Calu3 (cell line): ENCODE measurements at regions of chr12 and their contacts with region 1.

Region 1: GRCh38 chr12:12975322-12976077 is 23.5 kb upstream of the GPRC5D start:
- DNase-seq: peak; percentile 78
- H3K4me3 Mint-ChIP-seq: no peak overlapping the region
- H3K27ac Mint-ChIP-seq: no peak overlapping the region
- H3K4me1 Mint-ChIP-seq: peaks cover 8% of the 10 kb centered on the region
- H3K27me3 Mint-ChIP-seq: no peaks in the 10 kb centered on the region
- CTCF ChIP-seq: peak; percentile 59

Region 2: DNA sequence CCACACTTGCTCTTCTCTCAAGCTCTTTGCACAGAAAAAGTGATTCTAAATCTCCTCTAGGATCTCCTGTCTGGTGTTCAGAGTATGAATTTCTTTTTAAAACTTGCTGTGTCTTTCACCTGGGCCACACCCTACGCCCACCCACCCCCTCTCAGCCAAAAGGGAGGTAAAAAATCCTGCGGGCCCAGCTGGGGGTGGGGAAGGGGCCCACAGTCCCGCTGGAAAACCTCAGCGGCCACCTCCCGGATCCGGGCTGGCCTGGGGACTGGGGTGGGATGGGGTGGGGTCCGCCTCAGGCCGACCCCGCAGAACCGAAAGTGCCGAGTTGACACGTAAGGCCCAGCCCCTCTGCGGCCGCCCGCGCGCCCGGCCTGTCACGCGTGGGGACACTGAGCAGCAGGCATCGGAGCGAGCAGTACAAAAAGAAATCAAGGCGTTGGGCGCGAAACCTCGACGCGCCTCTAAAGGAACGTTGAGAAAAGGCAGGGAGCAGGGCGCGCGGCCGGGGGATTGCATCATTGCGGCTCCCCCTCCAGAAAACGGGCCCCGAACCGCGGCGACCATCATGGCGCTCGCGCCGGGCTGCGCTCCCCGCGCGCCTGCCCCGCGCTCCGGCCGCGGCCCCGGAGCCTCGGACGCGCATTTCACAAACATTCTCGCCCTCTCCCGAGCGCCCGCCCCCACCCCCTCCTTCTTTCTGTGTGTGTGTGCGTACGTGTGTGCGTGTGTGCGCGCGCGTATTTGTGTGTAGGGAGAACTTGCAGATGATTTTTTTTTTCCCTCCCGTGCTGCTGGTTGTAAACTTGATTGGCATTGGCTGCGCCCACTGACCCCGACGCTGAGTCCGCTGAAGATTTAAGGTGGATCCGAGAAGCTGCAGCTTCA is 250.6 kb before region 1 on chr12:
- CTCF ChIA-PET with region 1: no interaction called
- intact Hi-C with region 1: loop called (anchors 10 kb)
- DNase-seq: no peak
- H3K4me3 Mint-ChIP-seq: peak overlapping the region; percentile 99
- H3K27ac Mint-ChIP-seq: peak overlapping the region; percentile 98
- H3K4me1 Mint-ChIP-seq: peaks cover 26% of the 10 kb centered on the region
- H3K27me3 Mint-ChIP-seq: no peaks in the 10 kb centered on the region
- CTCF ChIP-seq: no peak

Region 3: GRCh38 chr12:12813120-12814101 is 162.1 kb before region 1 on chr12 and contains the start of gene DDX47:
- CTCF ChIA-PET with region 1: interaction called, 12 read pairs
- intact Hi-C with region 1: loop called (anchors 5 kb)
- DNase-seq: peak; percentile 98
- H3K4me3 Mint-ChIP-seq: peak within 1 kb of the TSS; percentile 88
- H3K27ac Mint-ChIP-seq: peak within 1 kb of the TSS; percentile 95
- H3K4me1 Mint-ChIP-seq: peaks cover 56% of the 10 kb centered on the region
- H3K27me3 Mint-ChIP-seq: no peaks in the 10 kb centered on the region
- CTCF ChIP-seq: peak; percentile 92
- total RNA-seq, gene DDX47: 60.2 and 60.5 TPM in 2 replicates

Region 4: DNA sequence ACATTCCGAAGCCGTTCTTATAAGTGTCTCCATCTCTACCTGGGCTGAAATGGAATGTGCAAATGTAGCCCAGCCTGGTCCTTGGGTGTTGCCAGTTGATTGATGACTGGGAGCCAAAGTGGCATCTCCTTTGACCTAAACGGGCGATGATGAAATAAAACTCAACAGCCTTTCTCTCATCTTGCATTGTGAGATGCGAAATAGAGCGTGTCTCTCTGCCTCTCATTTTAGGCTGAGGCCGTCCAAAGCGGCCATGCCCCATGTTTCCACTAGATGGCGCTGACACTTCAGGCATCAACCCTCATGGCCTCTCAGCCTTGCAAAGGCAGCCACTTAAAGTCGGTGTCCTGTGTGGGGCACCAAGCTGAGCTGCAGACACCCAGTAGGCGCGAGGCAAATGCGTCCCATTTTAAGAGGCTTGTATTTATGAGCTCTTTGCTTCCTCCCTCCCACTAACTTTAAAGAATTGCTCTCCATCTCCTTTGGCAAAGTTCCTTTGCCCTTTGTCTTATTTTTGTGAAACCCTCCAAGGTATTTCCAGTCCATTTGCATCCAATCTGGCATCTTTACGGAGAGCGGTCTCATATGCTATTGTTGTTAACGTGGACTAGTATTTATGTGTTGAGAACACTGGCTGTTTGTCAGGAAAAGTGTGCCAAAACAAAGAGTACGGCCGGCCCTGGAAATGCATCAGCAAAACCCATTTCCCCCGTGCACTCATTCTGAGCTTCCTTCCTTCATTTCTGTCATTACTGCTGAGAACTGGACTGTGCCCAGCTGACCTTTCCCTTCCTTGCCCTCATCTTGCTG is 59.2 kb before region 1 on chr12:
- CTCF ChIA-PET with region 1: interaction called, 6 read pairs
- intact Hi-C with region 1: loop called (anchors 5 kb)
- DNase-seq: peak; percentile 76
- H3K4me3 Mint-ChIP-seq: peak overlapping the region; percentile 26
- H3K27ac Mint-ChIP-seq: peak overlapping the region; percentile 80
- H3K4me1 Mint-ChIP-seq: peaks cover 58% of the 10 kb centered on the region
- H3K27me3 Mint-ChIP-seq: no peaks in the 10 kb centered on the region
- CTCF ChIP-seq: peak; percentile 90